Breast epithelium (tissue), 4 donors: ENCODE measurements at regions of chr5 and their contacts with region 1.

Region 1: DNA sequence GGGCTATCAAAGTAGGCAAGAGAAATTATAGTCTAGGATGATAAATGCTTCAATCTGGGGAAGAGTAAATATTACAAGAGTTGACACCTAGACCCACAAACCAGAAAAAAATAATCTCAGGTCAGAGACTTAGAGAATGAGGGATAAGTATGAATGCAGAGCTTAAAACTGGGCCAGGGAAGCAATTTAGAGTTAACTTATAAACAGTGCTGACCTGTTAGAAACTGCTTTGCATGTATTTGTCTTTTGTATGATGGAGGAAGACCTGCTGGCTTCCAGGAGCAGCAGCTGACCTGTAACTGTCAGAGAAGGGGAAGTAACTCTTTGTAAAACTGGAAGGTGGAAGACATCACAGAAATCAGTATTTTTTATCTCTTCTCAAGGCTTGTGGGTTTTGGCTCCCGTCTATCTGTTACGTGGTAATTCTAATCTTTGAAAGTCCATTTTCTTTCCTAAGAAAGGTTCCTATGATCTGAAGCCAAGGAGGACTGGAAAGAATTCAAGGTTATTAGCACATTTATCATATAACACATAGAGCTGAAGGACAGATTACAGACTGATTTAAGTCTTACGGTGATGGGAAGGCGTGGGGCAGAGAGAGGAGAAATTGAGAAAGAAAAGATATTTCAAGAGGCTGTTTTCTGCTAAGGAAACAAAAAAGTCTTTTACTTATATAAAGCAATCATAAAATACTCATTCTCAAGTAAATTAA is 114.7 kb upstream of the ADAMTS19 start:
- DNase-seq: no peak
- H3K4me3 ChIP-seq: no peak overlapping the region
- H3K27ac ChIP-seq: no peak overlapping the region
- H3K4me1 ChIP-seq: no peaks in the 10 kb centered on the region
- H3K27me3 ChIP-seq: no peaks in the 10 kb centered on the region
- CTCF ChIP-seq: no peak
- POLR2A ChIP-seq: no peak

Region 2: GRCh38 chr5:128426090-128426534 is 919.3 kb before region 1 on chr5:
- intact Hi-C with region 1: no loop called
- DNase-seq: no peak
- H3K4me3 ChIP-seq: no peak overlapping the region
- H3K27ac ChIP-seq: no peak overlapping the region
- H3K4me1 ChIP-seq: no peaks in the 10 kb centered on the region
- H3K27me3 ChIP-seq: no peaks in the 10 kb centered on the region
- CTCF ChIP-seq: no peak
- POLR2A ChIP-seq: no peak

Region 3: GRCh38 chr5:128913551-128913950 is 431.8 kb before region 1 on chr5:
- intact Hi-C with region 1: no loop called
- DNase-seq: no peak
- H3K4me3 ChIP-seq: no peak overlapping the region
- H3K27ac ChIP-seq: no peak overlapping the region
- H3K4me1 ChIP-seq: no peaks in the 10 kb centered on the region
- H3K27me3 ChIP-seq: no peaks in the 10 kb centered on the region
- CTCF ChIP-seq: no peak
- POLR2A ChIP-seq: no peak

Region 4: DNA sequence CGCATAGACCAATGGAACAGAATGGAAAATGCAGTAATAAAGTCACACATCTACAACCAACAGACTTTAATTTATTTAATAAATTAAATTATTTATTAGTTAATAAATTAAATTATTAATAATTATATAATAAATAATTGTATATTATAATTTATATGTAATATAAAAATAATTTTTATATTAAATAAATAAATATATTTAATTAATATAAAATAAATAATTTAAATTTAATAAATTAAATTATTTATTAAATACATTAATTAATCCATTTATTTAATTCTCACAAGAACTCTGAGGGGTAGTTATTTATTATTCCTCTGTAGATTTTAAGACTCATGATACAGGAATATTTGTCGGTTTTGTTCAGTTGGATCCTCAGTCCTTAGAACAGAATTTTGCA is 61.4 kb before region 1 on chr5:
- intact Hi-C with region 1: no loop called
- DNase-seq: no peak
- H3K4me3 ChIP-seq: no peak overlapping the region
- H3K27ac ChIP-seq: no peak overlapping the region
- H3K4me1 ChIP-seq: no peaks in the 10 kb centered on the region
- H3K27me3 ChIP-seq: no peaks in the 10 kb centered on the region
- CTCF ChIP-seq: no peak
- POLR2A ChIP-seq: no peak

Region 5: GRCh38 chr5:129377504-129377903 is 32.1 kb after region 1 on chr5:
- intact Hi-C with region 1: loop called (anchors 2 kb)
- DNase-seq: no peak
- H3K4me3 ChIP-seq: no peak overlapping the region
- H3K27ac ChIP-seq: no peak overlapping the region
- H3K4me1 ChIP-seq: no peaks in the 10 kb centered on the region
- H3K27me3 ChIP-seq: no peaks in the 10 kb centered on the region
- CTCF ChIP-seq: no peak
- POLR2A ChIP-seq: no peak

Region 6: DNA sequence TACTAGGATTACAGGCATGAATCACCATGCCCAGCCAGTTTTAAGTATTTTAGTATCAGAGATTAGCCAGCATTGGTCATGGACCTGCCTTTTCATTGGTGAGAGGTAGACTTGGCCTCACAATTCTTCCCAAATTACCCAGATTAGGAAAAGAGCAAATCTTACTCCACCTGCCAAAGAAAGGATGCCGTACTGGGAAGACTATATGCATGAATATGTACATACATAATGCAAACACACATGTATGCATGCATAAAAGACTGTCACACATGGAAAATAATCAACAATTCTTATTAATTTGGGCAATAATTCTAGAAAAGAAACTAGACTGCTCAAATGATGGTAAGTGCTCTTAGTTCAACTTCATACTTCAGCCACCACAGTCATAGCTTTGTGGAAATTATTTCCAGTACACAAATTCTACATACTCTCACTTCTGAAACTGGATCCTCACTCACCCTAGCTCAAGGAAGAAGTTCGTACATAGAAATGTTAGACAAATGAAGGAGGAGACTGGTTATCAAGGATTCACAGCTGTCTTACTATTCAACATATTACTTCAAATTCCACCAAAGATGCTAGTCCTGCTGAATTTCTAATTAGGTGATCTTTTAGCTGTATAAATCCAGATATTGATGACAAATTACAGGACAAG is 476.2 kb after region 1 on chr5:
- intact Hi-C with region 1: no loop called
- DNase-seq: no peak
- H3K4me3 ChIP-seq: no peak overlapping the region
- H3K27ac ChIP-seq: no peak overlapping the region
- H3K4me1 ChIP-seq: no peaks in the 10 kb centered on the region
- H3K27me3 ChIP-seq: no peaks in the 10 kb centered on the region
- CTCF ChIP-seq: no peak
- POLR2A ChIP-seq: no peak